ENCODE measurements at regions of chr2 and their contacts with region 1.

Region 1: GRCh38 chr2:188291617-188292347 is at the start of gene GULP1:
- DNase-seq: peak; percentile 87
- ATAC-seq: peak; percentile 73
- H3K4me3 Mint-ChIP-seq: peak within 1 kb of the TSS; percentile 89
- H3K27ac Mint-ChIP-seq: peak within 1 kb of the TSS; percentile 94
- H3K4me1 Mint-ChIP-seq: peaks cover 41% of the 10 kb centered on the region
- H3K27me3 Mint-ChIP-seq: no peaks in the 10 kb centered on the region
- CTCF ChIP-seq: no peak; the same call in 1 of the 2 replicates
- total RNA-seq, gene GULP1: 75.1 to 82.1 TPM (median 80.5 TPM) in 3 replicates

Region 2: GRCh38 chr2:188032786-188033185 is 259.0 kb before region 1 on chr2:
- CTCF ChIA-PET with region 1: no interaction called
- POLR2A ChIA-PET with region 1: interaction called, 11 read pairs
- DNase-seq: no peak
- ATAC-seq: peak; percentile 17
- H3K4me3 Mint-ChIP-seq: no peak overlapping the region
- H3K27ac Mint-ChIP-seq: no peak overlapping the region; the same call in 1 of the 2 replicates
- H3K4me1 Mint-ChIP-seq: peaks cover 48% of the 10 kb centered on the region
- H3K27me3 Mint-ChIP-seq: no peaks in the 10 kb centered on the region
- CTCF ChIP-seq: no peak

Region 3: GRCh38 chr2:188244383-188244782 is 47.4 kb before region 1 on chr2:
- CTCF ChIA-PET with region 1: no interaction called
- POLR2A ChIA-PET with region 1: no interaction called
- DNase-seq: no peak
- ATAC-seq: no peak
- H3K4me3 Mint-ChIP-seq: no peak overlapping the region
- H3K27ac Mint-ChIP-seq: peak overlapping the region; percentile 47; the same call in 1 of the 2 replicates
- H3K4me1 Mint-ChIP-seq: peaks cover 13% of the 10 kb centered on the region
- H3K27me3 Mint-ChIP-seq: no peaks in the 10 kb centered on the region
- CTCF ChIP-seq: no peak

Region 4: GRCh38 chr2:188278388-188279092 is 13.2 kb before region 1 on chr2:
- CTCF ChIA-PET with region 1: interaction called, 17 read pairs
- POLR2A ChIA-PET with region 1: interaction called, 24 read pairs
- DNase-seq: no peak
- ATAC-seq: peak; percentile 74
- H3K4me3 Mint-ChIP-seq: peak overlapping the region; percentile 66
- H3K27ac Mint-ChIP-seq: peak overlapping the region; percentile 98
- H3K4me1 Mint-ChIP-seq: peaks cover 63% of the 10 kb centered on the region
- H3K27me3 Mint-ChIP-seq: no peaks in the 10 kb centered on the region
- CTCF ChIP-seq: no peak

Region 5: GRCh38 chr2:188303363-188304031 is 11.7 kb after region 1 on chr2:
- CTCF ChIA-PET with region 1: interaction called, 13 read pairs
- POLR2A ChIA-PET with region 1: interaction called, 25 read pairs
- DNase-seq: no peak
- ATAC-seq: peak; percentile 88
- H3K4me3 Mint-ChIP-seq: peak overlapping the region; percentile 46
- H3K27ac Mint-ChIP-seq: peak overlapping the region; percentile 94
- H3K4me1 Mint-ChIP-seq: peaks cover 85% of the 10 kb centered on the region
- H3K27me3 Mint-ChIP-seq: no peaks in the 10 kb centered on the region
- CTCF ChIP-seq: no peak

Region 6: DNA sequence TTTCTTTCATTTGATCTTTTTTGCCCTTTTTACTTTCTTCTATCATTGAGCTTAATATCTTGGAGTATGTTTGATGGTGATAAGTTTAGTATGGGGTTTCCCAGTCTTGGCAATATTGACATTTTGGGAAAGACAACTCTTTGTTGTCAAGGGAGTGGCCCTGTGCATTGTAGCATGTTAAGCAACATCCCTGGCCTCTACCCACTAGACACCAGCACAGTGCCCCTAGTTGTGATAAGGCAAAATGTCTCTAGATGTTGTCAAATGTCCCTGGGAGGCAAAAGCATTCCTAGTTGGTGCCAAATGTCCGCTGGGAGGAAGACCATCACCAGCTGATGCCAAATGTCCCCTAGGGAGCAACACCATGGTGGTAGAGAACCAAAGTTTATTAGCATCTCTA is 28.0 kb after region 1 on chr2:
- CTCF ChIA-PET with region 1: interaction called, 11 read pairs
- POLR2A ChIA-PET with region 1: interaction called, 3 read pairs
- DNase-seq: no peak
- ATAC-seq: peak; percentile 60; the same call in 1 of the 2 replicates
- H3K4me3 Mint-ChIP-seq: no peak overlapping the region
- H3K27ac Mint-ChIP-seq: peak overlapping the region; percentile 94
- H3K4me1 Mint-ChIP-seq: peaks cover 76% of the 10 kb centered on the region
- H3K27me3 Mint-ChIP-seq: no peaks in the 10 kb centered on the region
- CTCF ChIP-seq: no peak

Region 7: GRCh38 chr2:188326669-188327301 is 35.0 kb after region 1 on chr2:
- CTCF ChIA-PET with region 1: interaction called, 11 read pairs
- POLR2A ChIA-PET with region 1: interaction called, 3 read pairs
- DNase-seq: no peak
- ATAC-seq: no peak
- H3K4me3 Mint-ChIP-seq: no peak overlapping the region
- H3K27ac Mint-ChIP-seq: peak overlapping the region; percentile 75; the same call in 1 of the 2 replicates
- H3K4me1 Mint-ChIP-seq: peaks cover 41% of the 10 kb centered on the region
- H3K27me3 Mint-ChIP-seq: no peaks in the 10 kb centered on the region
- CTCF ChIP-seq: no peak

Region 8: GRCh38 chr2:188369365-188369764 is 77.6 kb after region 1 on chr2:
- CTCF ChIA-PET with region 1: interaction called, 15 read pairs
- POLR2A ChIA-PET with region 1: interaction called, 5 read pairs
- DNase-seq: peak; percentile 16
- ATAC-seq: peak; percentile 79
- H3K4me3 Mint-ChIP-seq: no peak overlapping the region
- H3K27ac Mint-ChIP-seq: peak overlapping the region; percentile 25
- H3K4me1 Mint-ChIP-seq: peaks cover 67% of the 10 kb centered on the region
- H3K27me3 Mint-ChIP-seq: no peaks in the 10 kb centered on the region
- CTCF ChIP-seq: peak; percentile 50; the same call in 1 of the 2 replicates

Measured in WTC11 (cell line).